PC-9 (cell line): ENCODE measurements at regions of chr7 and their contacts with region 1.

Region 1: GRCh38 chr7:95569720-95570119 is 26.6 kb downstream of the PDK4 start:
- DNase-seq: no peak
- H3K4me3 ChIP-seq: no peak overlapping the region
- H3K27ac ChIP-seq: no peak overlapping the region
- H3K4me1 ChIP-seq: no peaks in the 10 kb centered on the region
- H3K27me3 ChIP-seq: no peaks in the 10 kb centered on the region
- CTCF ChIP-seq: no peak

Region 2: GRCh38 chr7:95139922-95140321 is 429.8 kb before region 1 on chr7:
- CTCF ChIA-PET with region 1: no interaction called
- POLR2A ChIA-PET with region 1: interaction called, 24 read pairs
- intact Hi-C with region 1: no loop called
- DNase-seq: no peak
- H3K4me3 ChIP-seq: no peak overlapping the region
- H3K27ac ChIP-seq: no peak overlapping the region
- H3K4me1 ChIP-seq: no peaks in the 10 kb centered on the region
- H3K27me3 ChIP-seq: no peaks in the 10 kb centered on the region
- CTCF ChIP-seq: no peak

Region 3: GRCh38 chr7:95509199-95509598 is 60.5 kb before region 1 on chr7:
- CTCF ChIA-PET with region 1: no interaction called
- POLR2A ChIA-PET with region 1: no interaction called
- intact Hi-C with region 1: no loop called
- DNase-seq: no peak
- H3K4me3 ChIP-seq: no peak overlapping the region
- H3K27ac ChIP-seq: no peak overlapping the region
- H3K4me1 ChIP-seq: 0 out of 2 replicates have a peak, but pooled peaks cover 4% of the 10 kb centered on the region
- H3K27me3 ChIP-seq: no peaks in the 10 kb centered on the region
- CTCF ChIP-seq: no peak

Region 4: DNA sequence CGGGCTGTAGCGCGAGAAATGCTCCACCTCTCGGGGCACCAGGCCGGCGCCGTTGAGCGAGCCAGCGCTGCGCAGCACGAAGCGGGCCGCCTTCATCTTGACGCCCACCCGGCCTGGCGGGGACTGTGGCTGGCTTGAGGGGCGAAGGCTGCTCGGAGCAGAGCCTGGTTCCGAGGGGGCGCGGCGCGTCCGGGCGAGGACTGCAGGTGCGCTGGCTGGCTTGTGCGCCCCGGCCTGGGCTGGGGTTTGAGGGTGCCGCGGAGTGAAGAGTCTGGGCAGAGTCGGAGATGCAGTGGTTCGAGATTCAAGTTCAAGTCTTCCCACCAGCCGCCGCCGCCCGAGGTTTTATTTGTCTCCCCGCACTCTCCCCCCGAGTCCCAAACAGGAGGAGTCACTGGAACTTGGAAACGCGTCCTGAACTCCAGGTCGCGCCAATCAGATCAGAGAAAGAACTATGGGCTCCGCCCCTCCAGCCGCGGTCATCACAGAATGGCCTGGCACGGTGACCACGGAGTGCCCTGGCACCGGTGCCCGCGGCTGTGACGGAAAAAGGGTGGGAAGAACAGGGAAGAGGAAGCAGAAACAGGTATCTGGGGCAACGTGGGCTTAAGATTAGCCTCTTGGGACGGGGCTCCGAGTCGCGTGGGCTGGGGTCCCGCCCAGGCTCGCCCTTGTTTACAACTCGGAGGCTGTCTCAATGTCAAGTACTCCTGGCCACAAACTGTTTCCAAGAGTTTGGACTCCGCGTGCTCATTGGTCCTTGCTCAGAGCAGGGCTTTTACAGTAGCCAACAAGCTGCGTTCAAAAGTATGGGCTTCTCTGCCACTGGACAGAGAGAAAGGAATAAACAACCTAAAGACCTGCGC is 26.7 kb after region 1 on chr7 and contains the start of gene PDK4:
- CTCF ChIA-PET with region 1: no interaction called
- POLR2A ChIA-PET with region 1: interaction called, 10 read pairs
- intact Hi-C with region 1: no loop called
- DNase-seq: peak; percentile 71 to 84
- H3K4me3 ChIP-seq: peak within 1 kb of the TSS; percentile 66
- H3K27ac ChIP-seq: peak within 1 kb of the TSS; percentile 40
- H3K4me1 ChIP-seq: peaks cover 13% of the 10 kb centered on the region
- H3K27me3 ChIP-seq: no peaks in the 10 kb centered on the region
- CTCF ChIP-seq: no peak
- total RNA-seq, gene PDK4: 2.4 and 4.8 TPM in 2 replicates